Posterior vena cava (tissue), 2 donors: ENCODE measurements at regions of chr3 and their contacts with region 1.

Region 1: DNA sequence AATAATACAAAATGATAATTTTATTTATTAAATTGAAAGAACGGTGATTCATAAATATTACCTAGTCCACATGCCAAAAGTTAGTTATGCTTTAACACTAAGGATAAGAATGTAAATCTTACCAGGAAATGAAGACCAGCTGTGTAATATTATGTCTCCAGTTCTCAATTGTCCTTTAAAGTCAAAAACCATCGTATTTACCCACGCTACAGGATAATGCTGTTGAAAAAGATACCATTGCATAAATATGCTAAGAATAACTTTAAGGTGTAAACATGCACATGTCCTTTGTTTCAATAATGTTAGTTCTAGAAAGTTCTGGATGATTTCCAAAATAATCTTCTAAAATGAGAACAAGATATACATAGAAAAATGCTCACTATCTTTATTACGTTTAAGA is 103.5 kb downstream of the FAIM start:
- DNase-seq: no peak

Region 2: GRCh38 chr3:138768125-138768524 is 56.0 kb after region 1 on chr3:
- intact Hi-C with region 1: loop called in 1 of 2 experiments (anchors 2 kb)
- DNase-seq: no peak